T-cell (primary cell): ENCODE measurements at regions of chr7 and their contacts with region 1.

Region 1: DNA sequence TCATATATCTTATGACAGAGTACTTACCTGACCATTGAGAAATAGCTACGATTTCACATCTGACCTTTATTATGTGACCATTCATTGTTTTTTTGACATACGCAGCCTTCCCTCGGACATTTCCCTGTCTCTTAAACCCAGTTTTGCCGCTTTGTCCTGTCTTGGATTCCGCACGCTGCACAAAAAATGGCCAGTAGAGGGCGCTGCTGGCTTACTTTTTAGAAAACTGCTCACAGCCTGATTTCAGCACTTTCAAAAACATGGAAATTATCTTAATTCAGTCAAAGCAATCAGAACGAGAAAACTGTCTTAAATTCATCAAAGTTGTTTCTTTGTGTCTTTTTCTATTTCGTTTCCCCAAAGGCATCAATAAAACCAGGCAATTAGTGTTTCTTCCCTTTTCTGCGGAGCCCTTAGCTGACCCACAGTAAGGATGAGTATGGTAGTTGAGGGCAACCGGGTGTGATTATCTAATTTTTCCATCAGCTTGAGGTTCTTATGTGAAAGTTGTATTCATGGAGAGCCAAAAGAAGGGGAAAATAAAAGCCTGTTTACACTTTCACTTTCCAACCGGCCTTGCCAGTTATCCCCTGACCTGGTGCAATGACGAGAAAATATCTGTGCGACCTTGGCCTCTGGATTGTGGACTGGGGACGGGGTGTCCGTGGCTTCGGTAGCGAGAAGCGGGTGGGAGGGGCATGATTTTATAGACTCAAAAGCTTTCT is 144.4 kb downstream of the DYNC1I1 start:
- DNase-seq: peak; percentile 8 to 77 (median 58)
- ATAC-seq: peak in 1 of 4 experiments; percentile 49
- H3K4me3 ChIP-seq: no peak overlapping the region
- H3K4me3 Mint-ChIP-seq: no peak overlapping the region
- H3K27ac ChIP-seq: no peak overlapping the region
- H3K27ac Mint-ChIP-seq: no peak overlapping the region
- H3K4me1 ChIP-seq: no peaks in the 10 kb centered on the region
- H3K4me1 Mint-ChIP-seq: peaks cover 0 to 4% (median 2%) of the 10 kb centered on the region in 3 donors
- H3K27me3 ChIP-seq: peaks cover 0 to 3% of the 10 kb centered on the region in 2 experiments
- H3K27me3 Mint-ChIP-seq: peaks cover 23% of the 10 kb centered on the region in 2 donors

Region 2: DNA sequence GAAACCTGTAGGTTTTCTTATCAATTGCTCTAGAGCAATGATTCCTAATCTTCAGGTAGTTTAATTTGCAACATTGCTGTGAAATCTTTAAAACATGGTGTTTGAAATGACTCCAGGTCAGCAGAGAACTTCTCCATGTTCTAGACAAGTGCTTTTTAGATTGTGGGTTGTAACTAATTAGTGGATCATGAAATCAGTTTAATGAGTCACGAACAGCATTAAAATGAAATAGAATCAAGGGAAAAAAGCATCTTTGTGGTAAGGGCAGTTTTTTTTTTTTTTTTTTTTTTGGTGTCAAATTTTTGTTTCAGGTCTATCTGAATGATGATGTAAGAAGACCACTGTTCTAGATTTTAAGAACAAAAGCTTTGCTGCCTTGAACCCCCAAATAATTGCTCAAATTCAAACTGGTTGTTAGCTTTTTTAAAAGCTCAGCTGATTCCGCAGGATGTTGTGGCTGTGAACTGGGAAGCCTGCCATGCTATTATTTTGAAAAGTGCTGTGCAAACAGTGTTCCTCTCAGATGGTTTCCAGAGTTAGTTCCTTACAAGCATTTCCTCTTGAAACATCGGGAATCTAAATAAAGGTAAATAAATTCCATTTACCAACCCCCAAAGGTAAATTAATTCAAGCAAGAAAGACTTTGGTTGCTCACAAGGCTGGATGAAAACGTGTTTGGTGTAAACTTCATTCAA is 307.3 kb before region 1 on chr7:
- CTCF ChIA-PET with region 1: interaction called in 1 of 2 experiments, 11 read pairs
- POLR2A ChIA-PET with region 1: no interaction called
- DNase-seq: no peak
- ATAC-seq: no peak
- H3K4me3 ChIP-seq: no peak overlapping the region
- H3K4me3 Mint-ChIP-seq: no peak overlapping the region
- H3K27ac ChIP-seq: no peak overlapping the region
- H3K27ac Mint-ChIP-seq: no peak overlapping the region
- H3K4me1 ChIP-seq: no peaks in the 10 kb centered on the region
- H3K4me1 Mint-ChIP-seq: peaks cover 0 to 11% (median 0%) of the 10 kb centered on the region in 3 donors
- H3K27me3 ChIP-seq: peaks cover 0 to 2% of the 10 kb centered on the region in 2 experiments
- H3K27me3 Mint-ChIP-seq: peaks cover 9 to 10% of the 10 kb centered on the region in 2 donors

Region 3: DNA sequence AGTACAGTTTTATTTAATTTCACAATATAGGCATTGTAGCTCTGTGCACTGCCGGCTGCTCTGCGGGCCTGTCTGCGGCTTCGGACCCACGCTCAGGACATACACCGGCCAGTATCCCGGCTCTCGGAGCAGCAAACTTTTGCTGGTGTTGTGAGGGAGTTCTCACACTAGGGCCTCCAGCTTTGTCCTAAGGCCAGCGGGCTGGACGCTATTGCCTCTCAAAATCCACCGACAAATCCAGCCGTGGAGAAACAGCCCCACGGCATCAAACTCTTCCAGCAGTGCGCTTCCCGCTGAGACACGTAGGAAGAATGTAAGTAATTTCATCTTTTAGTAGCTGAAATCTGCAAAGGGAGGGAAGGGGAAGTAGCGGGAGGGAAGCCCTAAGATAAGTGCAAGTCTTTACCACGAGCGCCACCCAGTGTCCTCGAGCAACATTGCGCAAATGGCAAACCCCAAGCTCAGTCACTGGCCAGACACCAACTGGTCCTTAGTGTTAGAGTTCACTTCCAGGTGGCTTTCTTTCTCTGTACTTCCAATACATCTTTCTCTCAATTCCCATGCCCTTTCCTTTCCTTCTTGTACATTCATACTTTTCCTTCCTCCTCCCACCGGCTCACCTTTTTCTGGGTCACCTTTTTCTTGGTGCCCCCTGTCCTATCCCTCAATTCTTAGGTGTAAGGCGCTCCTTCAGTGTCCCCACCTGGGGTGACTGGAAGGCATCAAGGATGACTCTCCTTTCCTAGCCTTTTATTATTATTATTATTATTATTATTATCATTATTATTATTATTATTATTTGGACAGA is 1110.9 kb after region 1 on chr7:
- CTCF ChIA-PET with region 1: interaction called, 20 to 28 read pairs
- POLR2A ChIA-PET with region 1: no interaction called
- DNase-seq: peak in 34 of 35 experiments; percentile 29 to 81 (median 58)
- ATAC-seq: peak; percentile 66 to 71 (median 70)
- H3K4me3 ChIP-seq: peak overlapping the region; percentile 23 to 60
- H3K4me3 Mint-ChIP-seq: peak overlapping the region; percentile 71 to 80 (median 79)
- H3K27ac ChIP-seq: no peak overlapping the region
- H3K27ac Mint-ChIP-seq: no peak overlapping the region
- H3K4me1 ChIP-seq: peaks cover 4 to 37% of the 10 kb centered on the region in 2 experiments
- H3K4me1 Mint-ChIP-seq: peaks cover 42 to 45% (median 44%) of the 10 kb centered on the region in 3 donors
- H3K27me3 ChIP-seq: peaks cover 14 to 62% of the 10 kb centered on the region in 2 experiments
- H3K27me3 Mint-ChIP-seq: peaks cover 61 to 73% of the 10 kb centered on the region in 2 donors